ENCODE measurements at regions of chr13 and their contacts with region 1.

Region 1: GRCh38 chr13:22883262-22883840 is 297.4 kb upstream of the SGCG start:
- DNase-seq: peak; percentile 21
- ATAC-seq: peak; percentile 73
- H3K4me3 ChIP-seq: peak overlapping the region; percentile 34; the same call in 1 of the 2 replicates
- H3K27ac ChIP-seq: peak overlapping the region; percentile 67
- H3K4me1 ChIP-seq: peaks cover 5% of the 10 kb centered on the region; the same call in 1 of the 2 replicates
- H3K27me3 ChIP-seq: no peaks in the 10 kb centered on the region
- CTCF ChIP-seq: no peak
- EP300 ChIP-seq: 0 out of 4 replicates have a peak, but pooled peaks of 1 of the 2 experiments have one; percentile 28
- POLR2A ChIP-seq: no peak
- RAD21 ChIP-seq: no peak

Region 2: GRCh38 chr13:22821589-22821988 is 61.8 kb before region 1 on chr13:
- CTCF ChIA-PET with region 1: no interaction called
- POLR2A ChIA-PET with region 1: no interaction called
- RAD21 ChIA-PET with region 1: no interaction called
- SMC1A ChIA-PET with region 1: no interaction called
- in situ Hi-C with region 1: no loop called
- intact Hi-C with region 1: loop called (anchors 5 kb)
- DNase-seq: no peak
- ATAC-seq: no peak
- H3K4me3 ChIP-seq: no peak overlapping the region
- H3K27ac ChIP-seq: no peak overlapping the region
- H3K4me1 ChIP-seq: no peaks in the 10 kb centered on the region
- H3K27me3 ChIP-seq: no peaks in the 10 kb centered on the region
- CTCF ChIP-seq: no peak
- EP300 ChIP-seq: no peak
- POLR2A ChIP-seq: no peak
- RAD21 ChIP-seq: no peak